ENCODE measurements at regions of chr9 and their contacts with region 1.

Region 1: DNA sequence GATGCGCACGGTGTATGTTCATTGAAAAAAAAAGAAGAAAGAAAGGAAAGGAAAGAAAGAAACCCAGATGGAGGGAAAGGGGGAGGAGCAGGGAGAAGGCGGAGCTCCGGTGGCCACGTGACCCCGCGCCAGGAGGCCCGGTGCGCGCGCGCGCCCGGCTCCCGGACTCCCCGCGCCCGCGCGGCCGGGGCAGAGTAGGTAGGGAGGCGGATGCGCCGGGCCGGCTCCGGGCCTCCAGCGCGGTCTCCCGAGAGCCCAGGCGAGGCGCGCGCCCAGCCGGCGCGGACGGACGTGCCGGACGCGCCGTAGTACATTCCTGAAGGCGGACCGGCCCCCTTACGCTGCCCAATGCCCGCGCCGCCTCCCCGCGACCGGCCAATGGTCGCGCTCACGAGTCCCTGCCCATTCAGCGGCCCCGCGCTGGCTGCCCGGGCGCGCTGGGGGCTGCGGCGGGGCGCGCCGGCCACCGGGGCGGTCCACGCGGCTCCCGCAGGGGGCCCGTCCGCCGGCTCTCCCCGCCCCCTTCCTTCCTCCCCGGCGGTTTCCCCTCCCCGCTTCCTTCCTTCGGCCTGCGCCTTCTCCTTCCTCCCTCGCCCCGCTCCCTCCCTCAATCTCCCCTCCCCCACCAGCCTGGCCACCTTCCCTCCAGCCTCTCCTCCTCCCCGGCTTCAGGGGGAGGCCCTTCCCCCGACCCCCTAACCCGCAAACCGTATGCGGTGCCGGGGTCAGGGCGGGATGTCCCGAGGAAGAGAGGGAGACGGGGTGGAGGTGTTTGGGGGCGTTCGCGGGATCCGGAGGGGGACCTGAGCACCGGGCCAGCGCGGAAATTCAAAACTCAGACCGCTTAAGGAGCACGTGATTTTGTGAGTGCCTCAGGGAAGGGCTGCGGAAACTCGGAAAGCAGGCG is 5.8 kb downstream of the PTCH1 start:
- DNase-seq: peak; percentile 88 to 94 (median 90)
- H3K4me3 ChIP-seq: peak overlapping the region; percentile 27 to 95 (median 82)
- H3K27ac ChIP-seq: peak overlapping the region in 4 of 5 donors; percentile 71 to 96 (median 82)
- H3K4me1 ChIP-seq: peaks cover 13 to 17% of the 10 kb centered on the region in 2 donors
- H3K27me3 ChIP-seq: no peaks in the 10 kb centered on the region
- CTCF ChIP-seq: no peak
- POLR2A ChIP-seq: peak; percentile 40 to 89

Region 2: DNA sequence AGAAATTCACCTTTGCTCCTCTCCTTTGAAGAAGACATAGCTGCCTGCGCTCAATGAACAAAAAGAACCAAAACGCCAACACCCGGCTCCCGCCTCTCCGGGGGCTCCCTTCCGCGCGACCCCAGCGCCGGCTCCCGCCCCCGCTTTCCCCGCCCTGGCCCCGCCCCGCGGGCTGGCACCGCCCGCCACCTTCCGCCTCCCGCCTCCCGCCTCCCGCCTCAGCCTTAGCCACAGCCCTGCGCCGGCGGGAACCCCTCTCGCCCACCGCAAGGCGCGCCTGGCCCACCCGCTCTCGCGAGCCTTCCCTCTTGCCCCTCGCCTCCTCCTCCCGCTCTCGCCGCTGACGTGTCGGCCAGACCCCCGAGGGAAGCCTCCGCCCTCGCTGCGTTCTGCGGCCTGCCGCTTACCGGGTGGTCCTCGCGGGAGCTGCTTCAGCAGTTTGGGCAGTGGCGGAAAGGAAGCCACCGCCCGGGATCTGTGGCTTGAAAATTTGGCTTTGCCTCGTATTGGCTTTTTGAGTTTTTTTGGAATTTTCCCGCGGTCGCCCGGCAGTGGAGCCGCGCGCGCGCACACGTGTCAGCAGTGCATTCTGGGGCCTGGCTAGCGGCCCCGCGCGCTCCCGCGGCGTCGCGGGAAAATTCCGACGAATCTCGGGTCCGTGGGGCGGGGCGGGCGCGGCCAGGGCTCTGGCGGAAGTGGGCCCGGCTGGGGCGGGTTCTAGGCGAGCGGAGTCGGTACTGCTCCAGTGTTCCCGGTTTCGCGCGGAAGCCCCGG is 193.7 kb before region 1 on chr9 and contains the start of gene FANCC:
- intact Hi-C with region 1: loop called (anchors 5 to 10 kb)
- DNase-seq: peak; percentile 89 to 94 (median 93)
- H3K4me3 ChIP-seq: peak within 1 kb of the TSS; percentile 87 to 99 (median 94)
- H3K27ac ChIP-seq: peak within 1 kb of the TSS; percentile 80 to 93 (median 85)
- H3K4me1 ChIP-seq: peaks cover 0 to 16% of the 10 kb centered on the region in 2 donors
- H3K27me3 ChIP-seq: no peaks in the 10 kb centered on the region
- CTCF ChIP-seq: peak in 2 of 6 experiments; percentile 4 to 8
- POLR2A ChIP-seq: peak; percentile 24 to 62
- total RNA-seq, gene FANCC: 2.1 to 6.1 (median 4.4) TPM

Region 3: GRCh38 chr9:95875305-95876137 is 364.6 kb after region 1 on chr9 and contains the start of gene ERCC6L2:
- intact Hi-C with region 1: loop called in 1 of 2 experiments (anchors 10 kb)
- DNase-seq: peak; percentile 94 to 99 (median 96)
- H3K4me3 ChIP-seq: peak within 1 kb of the TSS in 2 of 4 donors; percentile 43 to 99
- H3K27ac ChIP-seq: peak within 1 kb of the TSS in 2 of 5 donors; percentile 99 to 100
- H3K4me1 ChIP-seq: peaks cover 14 to 26% of the 10 kb centered on the region in 2 donors
- H3K27me3 ChIP-seq: no peaks in the 10 kb centered on the region
- CTCF ChIP-seq: peak in 3 of 6 experiments; percentile 26 to 36 (median 27)
- POLR2A ChIP-seq: peak; percentile 56 to 84
- total RNA-seq, gene ERCC6L2: 38.6 to 93.2 (median 51.2) TPM

Region 4: GRCh38 chr9:96279960-96280359 is 769.0 kb after region 1 on chr9:
- intact Hi-C with region 1: no loop called
- DNase-seq: no peak
- H3K4me3 ChIP-seq: no peak overlapping the region
- H3K27ac ChIP-seq: no peak overlapping the region
- H3K4me1 ChIP-seq: no peaks in the 10 kb centered on the region
- H3K27me3 ChIP-seq: no peaks in the 10 kb centered on the region
- CTCF ChIP-seq: no peak
- POLR2A ChIP-seq: no peak

Measured in adrenal gland (tissue), 19 donors.